CD4-positive, alpha-beta memory T cell (primary cell): ENCODE measurements at regions of chr15 and their contacts with region 1.

Region 1: GRCh38 chr15:40754883-40755811 is at the start of gene RMDN3:
- DNase-seq: peak; percentile 90 to 93 (median 92)
- H3K4me3 ChIP-seq: peak within 1 kb of the TSS; percentile 65 to 96
- H3K4me3 Mint-ChIP-seq: peak within 1 kb of the TSS; percentile 91 to 99 (median 94)
- H3K27ac ChIP-seq: peak within 1 kb of the TSS; percentile 85
- H3K27ac Mint-ChIP-seq: peak within 1 kb of the TSS; percentile 82 to 98 (median 95)
- H3K4me1 ChIP-seq: peaks cover 31% of the 10 kb centered on the region
- H3K4me1 Mint-ChIP-seq: peaks cover 11 to 40% (median 26%) of the 10 kb centered on the region in 4 donors
- H3K27me3 ChIP-seq: no peaks in the 10 kb centered on the region
- H3K27me3 Mint-ChIP-seq: no peaks in the 10 kb centered on the region
- total RNA-seq, gene RMDN3: 24.5 to 26.7 TPM

Region 2: DNA sequence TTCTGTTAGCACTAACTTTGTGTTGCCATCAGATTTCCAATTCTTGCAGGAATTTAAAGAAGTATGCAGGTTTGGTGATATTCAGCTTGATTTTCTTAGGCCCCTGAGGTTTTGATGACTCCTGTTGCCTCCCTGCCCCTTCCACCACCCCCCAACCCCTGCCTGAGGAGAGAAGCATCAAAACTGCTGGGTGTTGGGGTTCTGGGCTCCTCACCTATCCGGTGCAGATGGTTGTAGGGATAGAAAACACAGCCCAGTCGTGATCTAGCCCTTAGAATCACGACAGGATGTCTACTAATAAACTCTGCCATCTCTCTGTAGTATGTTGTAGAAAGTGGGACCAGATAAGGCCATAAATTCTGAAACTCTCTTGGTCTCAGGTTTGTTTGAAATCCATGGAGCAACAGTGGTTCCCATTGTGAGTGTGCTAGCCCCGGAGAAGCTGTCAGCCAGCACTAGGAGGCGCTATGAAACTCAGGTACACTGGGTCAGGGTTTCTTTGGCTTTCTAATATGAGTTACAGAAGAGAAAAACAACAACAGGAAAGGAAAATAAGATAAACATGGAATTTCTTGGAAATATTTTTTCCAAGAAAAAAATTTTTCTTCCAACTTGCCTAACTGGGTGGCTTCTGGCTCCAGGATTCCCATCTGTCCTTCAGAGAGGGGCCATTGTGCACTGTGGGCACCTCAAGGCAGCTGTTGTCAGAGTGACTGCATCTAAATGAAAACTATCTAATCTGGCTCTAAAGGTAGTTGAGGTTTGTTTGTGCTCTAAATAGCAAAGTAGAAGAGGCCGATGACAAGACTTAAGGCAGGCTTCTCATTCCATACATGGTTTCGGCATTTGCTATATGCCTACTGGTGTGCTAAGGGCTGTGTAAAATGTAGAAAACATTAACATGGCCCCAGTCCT is 724.9 kb before region 1 on chr15:
- CTCF ChIA-PET with region 1: no interaction called
- POLR2A ChIA-PET with region 1: no interaction called
- intact Hi-C with region 1: no loop called
- DNase-seq: no peak
- H3K4me3 ChIP-seq: no peak overlapping the region
- H3K4me3 Mint-ChIP-seq: no peak overlapping the region
- H3K27ac ChIP-seq: no peak overlapping the region
- H3K27ac Mint-ChIP-seq: peak overlapping the region in 4 of 7 donors; percentile 4 to 50 (median 10)
- H3K4me1 ChIP-seq: no peaks in the 10 kb centered on the region
- H3K4me1 Mint-ChIP-seq: no peaks in the 10 kb centered on the region
- H3K27me3 ChIP-seq: no peaks in the 10 kb centered on the region
- H3K27me3 Mint-ChIP-seq: no peaks in the 10 kb centered on the region

Region 3: GRCh38 chr15:40274350-40275274 is 480.5 kb before region 1 on chr15:
- CTCF ChIA-PET with region 1: no interaction called
- POLR2A ChIA-PET with region 1: no interaction called
- intact Hi-C with region 1: no loop called
- DNase-seq: peak; percentile 81 to 88 (median 84)
- H3K4me3 ChIP-seq: no peak overlapping the region
- H3K4me3 Mint-ChIP-seq: no peak overlapping the region
- H3K27ac ChIP-seq: no peak overlapping the region
- H3K27ac Mint-ChIP-seq: peak overlapping the region in 3 of 7 donors; percentile 24 to 54 (median 32)
- H3K4me1 ChIP-seq: peaks cover 5% of the 10 kb centered on the region
- H3K4me1 Mint-ChIP-seq: peaks cover 2 to 11% (median 5%) of the 10 kb centered on the region in 4 donors
- H3K27me3 ChIP-seq: no peaks in the 10 kb centered on the region
- H3K27me3 Mint-ChIP-seq: peaks cover 3 to 18% of the 10 kb centered on the region in 2 donors

Region 4: DNA sequence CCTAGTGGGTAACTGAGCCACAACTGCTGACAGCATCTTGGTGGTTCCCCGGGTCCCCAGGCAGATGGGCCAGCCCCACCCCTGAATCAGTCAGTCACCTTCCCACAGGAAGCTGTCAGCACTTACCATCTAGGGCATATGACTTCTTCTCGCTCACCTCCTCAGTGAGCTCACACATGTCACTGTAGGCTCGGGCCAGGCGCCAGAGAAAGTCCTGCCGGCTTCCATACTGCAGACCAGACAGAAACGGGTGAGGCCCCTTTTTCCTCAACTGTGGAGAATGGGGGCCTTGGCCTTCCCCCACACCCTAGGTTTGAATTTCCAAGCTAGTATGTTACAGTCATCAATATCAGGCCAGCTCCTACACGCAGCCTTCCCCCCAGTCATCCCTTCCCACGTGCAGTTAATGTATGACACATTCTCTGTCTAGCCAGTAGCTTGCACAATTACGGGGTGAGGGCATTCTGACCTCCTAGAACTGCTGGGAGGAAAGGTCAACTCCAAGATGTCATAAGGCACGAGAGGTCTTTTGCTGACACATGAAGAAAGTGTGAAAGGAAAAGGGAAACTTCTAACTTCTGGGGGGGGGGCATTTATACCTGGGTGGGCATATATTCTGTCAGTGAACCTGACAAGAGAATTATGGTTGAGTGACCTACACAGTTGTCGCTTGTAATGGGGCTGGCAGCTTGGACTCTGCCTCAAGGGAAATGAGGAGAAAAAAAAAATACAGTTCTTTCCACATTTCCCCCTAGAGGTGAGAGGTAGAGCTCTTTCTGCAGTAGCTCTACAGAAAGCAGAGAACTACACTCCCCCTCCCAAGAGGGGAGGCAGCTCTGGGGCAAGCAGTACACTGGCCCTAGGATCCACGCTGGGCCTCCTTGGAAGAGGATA is 11.0 kb before region 1 on chr15:
- CTCF ChIA-PET with region 1: interaction called, 7 read pairs
- POLR2A ChIA-PET with region 1: interaction called, 7 read pairs
- intact Hi-C with region 1: loop called (anchors 1 kb)
- DNase-seq: peak; percentile 64 to 90 (median 73)
- H3K4me3 ChIP-seq: peak overlapping the region in 1 of 2 donors; percentile 6
- H3K4me3 Mint-ChIP-seq: peak overlapping the region; percentile 51 to 83 (median 68)
- H3K27ac ChIP-seq: peak overlapping the region; percentile 71
- H3K27ac Mint-ChIP-seq: peak overlapping the region; percentile 96 to 99 (median 97)
- H3K4me1 ChIP-seq: peaks cover 26% of the 10 kb centered on the region
- H3K4me1 Mint-ChIP-seq: peaks cover 10 to 20% (median 16%) of the 10 kb centered on the region in 4 donors
- H3K27me3 ChIP-seq: no peaks in the 10 kb centered on the region
- H3K27me3 Mint-ChIP-seq: no peaks in the 10 kb centered on the region